ENCODE measurements at regions of chr9 and their contacts with region 1.

Region 1: DNA sequence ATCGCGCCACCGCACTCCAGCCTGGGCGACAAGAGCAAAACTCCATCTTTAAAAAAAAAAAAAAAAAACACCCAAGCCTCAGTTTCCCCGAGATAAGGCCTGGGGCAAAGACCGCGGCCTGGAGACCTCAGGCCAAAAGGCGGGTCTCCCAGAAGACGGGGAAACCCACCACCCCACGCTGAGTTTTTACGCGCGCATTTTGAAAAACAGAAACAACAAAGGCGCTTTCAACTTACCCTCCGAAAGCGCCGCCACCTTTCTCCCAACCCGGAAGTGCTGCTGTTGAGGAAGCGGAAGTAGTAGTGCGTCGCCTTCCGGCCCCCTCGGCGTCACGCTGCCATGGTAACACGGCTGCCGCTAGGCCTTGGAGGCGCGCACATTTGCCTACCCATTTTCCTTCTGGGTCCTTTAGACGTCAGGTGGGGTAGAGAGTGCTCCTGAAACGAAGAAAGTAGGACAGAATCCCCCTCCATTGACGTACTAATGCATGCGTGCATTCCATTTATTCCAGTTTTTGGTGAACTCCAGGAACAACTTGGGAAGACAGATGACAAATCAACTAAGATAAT is at the start of gene TTF1:
- DNase-seq: peak; percentile 77
- ATAC-seq: peak; percentile 83
- H3K4me3 ChIP-seq: peak within 1 kb of the TSS; percentile 68
- H3K27ac ChIP-seq: peak within 1 kb of the TSS; percentile 74
- H3K4me1 ChIP-seq: peaks cover 17% of the 10 kb centered on the region
- H3K27me3 ChIP-seq: peaks cover 0 to 8% of the 10 kb centered on the region in 2 experiments; a peak in 1 of 4 replicates
- CTCF ChIP-seq: no peak
- EP300 ChIP-seq: no peak
- POLR2A ChIP-seq: peak; percentile 68
- RAD21 ChIP-seq: no peak
- polyA plus RNA-seq, gene TTF1: 11.3 to 16.0 TPM

Region 2: DNA sequence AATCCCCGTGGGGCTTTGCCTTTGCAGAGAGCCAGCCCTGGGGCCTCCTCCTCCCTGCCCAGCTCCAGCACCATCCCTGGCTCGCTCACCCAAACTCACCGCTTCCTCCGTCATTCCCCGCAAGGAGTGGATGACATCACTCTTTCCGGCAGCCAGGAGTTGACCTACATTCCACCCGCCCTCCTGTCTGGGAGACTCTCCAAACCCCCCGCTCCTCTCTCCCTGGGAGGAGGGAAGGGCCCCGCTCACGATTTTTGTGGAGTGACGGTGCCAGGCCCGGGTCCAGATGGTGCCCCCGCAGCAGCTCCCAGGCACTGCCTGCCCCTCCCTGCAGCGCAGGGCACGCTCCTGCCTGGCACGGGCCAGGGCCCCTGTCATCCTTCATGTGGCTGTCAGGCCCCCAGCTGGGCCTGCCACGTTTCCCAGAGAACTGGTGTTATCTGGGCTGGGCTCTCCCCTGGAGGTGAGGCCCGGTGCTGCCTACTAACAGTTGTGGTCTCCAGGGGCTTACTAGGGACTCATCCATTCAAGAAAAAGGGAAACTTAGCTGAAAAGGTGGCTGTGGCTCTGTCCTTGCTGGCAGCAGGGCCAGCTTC is 192.5 kb before region 1 on chr9:
- CTCF ChIA-PET with region 1: no interaction called
- POLR2A ChIA-PET with region 1: no interaction called
- RAD21 ChIA-PET with region 1: no interaction called
- SMC1A ChIA-PET with region 1: no interaction called
- in situ Hi-C with region 1: no loop called
- intact Hi-C with region 1: no loop called
- DNase-seq: no peak
- ATAC-seq: no peak
- H3K4me3 ChIP-seq: no peak overlapping the region
- H3K27ac ChIP-seq: no peak overlapping the region
- H3K4me1 ChIP-seq: no peaks in the 10 kb centered on the region
- H3K27me3 ChIP-seq: peaks cover 0 to 5% of the 10 kb centered on the region in 2 experiments; a peak in 2 of 4 replicates
- CTCF ChIP-seq: no peak
- EP300 ChIP-seq: no peak
- POLR2A ChIP-seq: no peak
- RAD21 ChIP-seq: no peak

Region 3: GRCh38 chr9:132354637-132355355 is 51.8 kb before region 1 on chr9 and contains the start of gene SETX:
- CTCF ChIA-PET with region 1: interaction called, 3 read pairs
- POLR2A ChIA-PET with region 1: interaction called, 5 read pairs
- RAD21 ChIA-PET with region 1: interaction called, 6 read pairs
- SMC1A ChIA-PET with region 1: interaction called, 5 read pairs
- in situ Hi-C with region 1: no loop called
- intact Hi-C with region 1: loop called (anchors 1 kb)
- DNase-seq: peak; percentile 85
- ATAC-seq: peak; percentile 92
- H3K4me3 ChIP-seq: peak within 1 kb of the TSS; percentile 86
- H3K27ac ChIP-seq: peak within 1 kb of the TSS; percentile 97
- H3K4me1 ChIP-seq: peaks cover 8% of the 10 kb centered on the region; the same call in 1 of the 2 replicates
- H3K27me3 ChIP-seq: no peaks in the 10 kb centered on the region
- CTCF ChIP-seq: no peak
- EP300 ChIP-seq: peak in 1 of 2 experiments; percentile 71; a peak in 2 of 4 replicates
- POLR2A ChIP-seq: peak; percentile 99
- RAD21 ChIP-seq: no peak
- polyA plus RNA-seq, gene SETX: 15.8 to 16.1 TPM

Region 4: DNA sequence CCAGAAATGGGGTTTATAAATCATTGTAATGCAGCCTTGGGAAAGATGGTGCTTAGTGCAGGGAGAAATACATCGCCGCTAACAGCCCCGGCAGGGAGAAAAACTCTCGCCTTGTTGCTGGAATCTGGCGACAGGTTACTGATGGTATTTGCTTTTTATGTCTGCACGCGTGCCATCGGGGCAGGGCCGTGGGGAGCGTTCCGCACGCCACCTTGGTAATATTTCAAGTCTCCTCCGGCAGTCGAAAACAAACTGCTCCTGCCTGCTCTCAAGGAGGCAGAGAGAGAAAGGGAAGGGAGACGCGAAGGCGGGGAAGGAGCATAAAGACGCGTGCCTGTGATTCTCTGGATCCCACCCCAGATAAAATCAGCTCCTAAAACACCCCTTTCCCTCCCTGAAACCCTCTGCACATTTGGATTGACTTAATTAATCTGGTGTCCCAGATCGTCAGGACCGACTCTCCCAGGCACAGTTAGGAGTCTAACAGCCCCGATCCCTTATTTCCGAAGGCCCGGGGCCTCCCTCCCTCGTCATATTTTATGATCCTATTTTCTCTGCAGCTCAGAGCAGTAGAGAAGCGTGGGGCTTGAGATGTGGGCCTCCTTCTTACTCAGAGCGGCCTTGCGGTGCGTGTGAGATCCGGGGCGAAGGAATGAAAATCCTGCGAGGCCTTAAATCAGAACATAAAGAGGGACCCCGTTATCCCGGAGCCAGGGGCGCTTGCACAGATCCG is 51.0 kb after region 1 on chr9:
- CTCF ChIA-PET with region 1: no interaction called
- POLR2A ChIA-PET with region 1: no interaction called
- RAD21 ChIA-PET with region 1: no interaction called
- SMC1A ChIA-PET with region 1: no interaction called
- in situ Hi-C with region 1: no loop called
- intact Hi-C with region 1: no loop called
- DNase-seq: no peak
- ATAC-seq: no peak
- H3K4me3 ChIP-seq: no peak overlapping the region
- H3K27ac ChIP-seq: no peak overlapping the region
- H3K4me1 ChIP-seq: no peaks in the 10 kb centered on the region
- H3K27me3 ChIP-seq: peaks cover 0 to 1% of the 10 kb centered on the region in 2 experiments; a peak in 1 of 4 replicates
- CTCF ChIP-seq: no peak
- EP300 ChIP-seq: no peak
- POLR2A ChIP-seq: no peak
- RAD21 ChIP-seq: no peak

Region 5: GRCh38 chr9:132507746-132508469 is 101.3 kb after region 1 on chr9:
- CTCF ChIA-PET with region 1: interaction called, 4 read pairs
- POLR2A ChIA-PET with region 1: no interaction called
- RAD21 ChIA-PET with region 1: no interaction called
- SMC1A ChIA-PET with region 1: no interaction called
- in situ Hi-C with region 1: no loop called
- intact Hi-C with region 1: loop called (anchors 5 kb)
- DNase-seq: no peak
- ATAC-seq: peak; percentile 92
- H3K4me3 ChIP-seq: no peak overlapping the region
- H3K27ac ChIP-seq: no peak overlapping the region
- H3K4me1 ChIP-seq: no peaks in the 10 kb centered on the region
- H3K27me3 ChIP-seq: peaks cover 0 to 3% of the 10 kb centered on the region in 2 experiments; a peak in 2 of 4 replicates
- CTCF ChIP-seq: peak; percentile 74 to 83 (median 77)
- EP300 ChIP-seq: no peak
- POLR2A ChIP-seq: no peak
- RAD21 ChIP-seq: peak; percentile 76

Region 6: DNA sequence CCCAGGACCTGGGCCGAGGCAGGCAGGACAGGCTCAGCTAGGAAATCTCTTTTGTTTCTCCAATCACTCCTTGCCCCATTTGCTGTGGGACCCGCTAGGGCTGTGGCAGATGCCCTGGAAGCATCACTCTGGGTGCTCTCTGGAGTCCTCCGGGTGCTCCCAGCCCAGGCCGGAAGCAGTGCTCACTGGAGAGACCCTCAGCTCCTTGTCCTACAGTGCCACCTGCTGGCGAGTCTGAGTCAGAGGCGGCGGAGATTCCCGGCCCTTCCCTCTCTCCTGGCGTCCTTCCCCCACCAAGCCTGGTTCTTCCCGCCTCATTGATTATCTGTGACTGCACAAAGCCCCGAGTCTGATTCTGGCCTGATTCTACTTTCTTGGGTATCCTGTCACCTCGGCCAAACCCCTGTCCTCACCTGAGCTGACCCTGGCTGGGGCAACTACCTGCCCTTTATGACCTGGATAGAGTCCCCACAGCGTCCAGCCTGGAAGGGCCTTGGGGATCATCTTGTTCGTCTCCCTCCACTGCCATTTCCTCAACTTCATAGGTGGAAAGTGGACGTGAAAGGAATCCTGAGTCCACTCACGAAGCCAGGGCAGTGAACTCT is 168.5 kb after region 1 on chr9:
- CTCF ChIA-PET with region 1: interaction called, 39 read pairs
- POLR2A ChIA-PET with region 1: no interaction called
- RAD21 ChIA-PET with region 1: no interaction called
- SMC1A ChIA-PET with region 1: no interaction called
- in situ Hi-C with region 1: loop called (anchors 5 kb)
- intact Hi-C with region 1: loop called (anchors 1 kb)
- DNase-seq: no peak
- ATAC-seq: peak; percentile 83
- H3K4me3 ChIP-seq: no peak overlapping the region
- H3K27ac ChIP-seq: no peak overlapping the region
- H3K4me1 ChIP-seq: no peaks in the 10 kb centered on the region
- H3K27me3 ChIP-seq: peaks cover 5 to 6% of the 10 kb centered on the region in 2 experiments
- CTCF ChIP-seq: peak; percentile 62 to 75 (median 70); a peak in 5 of 6 replicates
- EP300 ChIP-seq: no peak
- POLR2A ChIP-seq: no peak
- RAD21 ChIP-seq: peak; percentile 80

Region 7: DNA sequence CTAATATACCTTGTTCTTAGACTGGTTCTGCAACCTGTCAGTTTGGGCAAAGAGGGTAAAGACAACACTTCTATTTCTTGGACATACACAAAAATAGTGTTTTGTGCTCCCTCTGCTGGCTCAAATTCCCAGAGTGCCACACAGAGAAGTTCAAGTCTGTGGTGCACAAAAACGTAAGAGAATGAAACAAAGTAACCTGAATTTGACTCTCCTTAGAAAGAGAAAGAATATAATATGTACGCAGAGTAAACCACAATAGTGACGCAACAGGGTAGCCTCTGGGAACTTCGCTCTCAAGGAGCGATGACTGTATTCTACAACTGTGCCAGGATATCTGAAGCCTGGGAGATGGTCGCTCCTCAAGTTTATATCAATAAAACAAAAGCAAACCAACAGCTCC is 244.6 kb after region 1 on chr9:
- CTCF ChIA-PET with region 1: interaction called, 3 read pairs
- POLR2A ChIA-PET with region 1: no interaction called
- RAD21 ChIA-PET with region 1: no interaction called
- SMC1A ChIA-PET with region 1: no interaction called
- in situ Hi-C with region 1: no loop called
- intact Hi-C with region 1: loop called (anchors 10 kb)
- DNase-seq: no peak
- ATAC-seq: no peak
- H3K4me3 ChIP-seq: no peak overlapping the region
- H3K27ac ChIP-seq: no peak overlapping the region
- H3K4me1 ChIP-seq: no peaks in the 10 kb centered on the region
- H3K27me3 ChIP-seq: no peaks in the 10 kb centered on the region
- CTCF ChIP-seq: peak; percentile 18 to 24 (median 21); a peak in 2 of 6 replicates
- EP300 ChIP-seq: no peak
- POLR2A ChIP-seq: no peak
- RAD21 ChIP-seq: no peak

Measured in GM12878 (cell line).